Heart left ventricle (tissue), 16 donors: ENCODE measurements at regions of chr4 and their contacts with region 1.

Region 1: GRCh38 chr4:187826721-187827120 is 168.8 kb upstream of the ZFP42 start:
- DNase-seq: no peak
- ATAC-seq: no peak
- H3K4me3 ChIP-seq: no peak overlapping the region
- H3K27ac ChIP-seq: no peak overlapping the region
- H3K4me1 ChIP-seq: no peaks in the 10 kb centered on the region
- H3K27me3 ChIP-seq: no peaks in the 10 kb centered on the region
- CTCF ChIP-seq: no peak
- POLR2A ChIP-seq: no peak

Region 2: GRCh38 chr4:187798385-187798784 is 28.3 kb before region 1 on chr4:
- intact Hi-C with region 1: loop called in 1 of 10 experiments (anchors 2 kb)
- DNase-seq: no peak
- ATAC-seq: no peak
- H3K4me3 ChIP-seq: no peak overlapping the region
- H3K27ac ChIP-seq: no peak overlapping the region
- H3K4me1 ChIP-seq: no peaks in the 10 kb centered on the region
- H3K27me3 ChIP-seq: no peaks in the 10 kb centered on the region
- CTCF ChIP-seq: no peak
- POLR2A ChIP-seq: no peak